HCT116 (cell line): ENCODE measurements at regions of chr4 and their contacts with region 1.

Region 1: GRCh38 chr4:83284193-83285054 is at the start of gene COQ2:
- DNase-seq: peak; percentile 79
- ATAC-seq: peak; percentile 91
- H3K4me3 ChIP-seq: peak within 1 kb of the TSS; percentile 63 to 66
- H3K27ac ChIP-seq: peak within 1 kb of the TSS; percentile 90
- H3K4me1 ChIP-seq: peaks cover 6 to 27% of the 10 kb centered on the region in 2 experiments; a peak in 3 of 4 replicates
- H3K27me3 ChIP-seq: no peaks in the 10 kb centered on the region
- CTCF ChIP-seq: peak in 1 of 3 experiments; percentile 8; a peak in 1 of 6 replicates
- POLR2A ChIP-seq: peak; percentile 72
- RAD21 ChIP-seq: no peak
- total RNA-seq, gene COQ2: 20.6 TPM

Region 2: DNA sequence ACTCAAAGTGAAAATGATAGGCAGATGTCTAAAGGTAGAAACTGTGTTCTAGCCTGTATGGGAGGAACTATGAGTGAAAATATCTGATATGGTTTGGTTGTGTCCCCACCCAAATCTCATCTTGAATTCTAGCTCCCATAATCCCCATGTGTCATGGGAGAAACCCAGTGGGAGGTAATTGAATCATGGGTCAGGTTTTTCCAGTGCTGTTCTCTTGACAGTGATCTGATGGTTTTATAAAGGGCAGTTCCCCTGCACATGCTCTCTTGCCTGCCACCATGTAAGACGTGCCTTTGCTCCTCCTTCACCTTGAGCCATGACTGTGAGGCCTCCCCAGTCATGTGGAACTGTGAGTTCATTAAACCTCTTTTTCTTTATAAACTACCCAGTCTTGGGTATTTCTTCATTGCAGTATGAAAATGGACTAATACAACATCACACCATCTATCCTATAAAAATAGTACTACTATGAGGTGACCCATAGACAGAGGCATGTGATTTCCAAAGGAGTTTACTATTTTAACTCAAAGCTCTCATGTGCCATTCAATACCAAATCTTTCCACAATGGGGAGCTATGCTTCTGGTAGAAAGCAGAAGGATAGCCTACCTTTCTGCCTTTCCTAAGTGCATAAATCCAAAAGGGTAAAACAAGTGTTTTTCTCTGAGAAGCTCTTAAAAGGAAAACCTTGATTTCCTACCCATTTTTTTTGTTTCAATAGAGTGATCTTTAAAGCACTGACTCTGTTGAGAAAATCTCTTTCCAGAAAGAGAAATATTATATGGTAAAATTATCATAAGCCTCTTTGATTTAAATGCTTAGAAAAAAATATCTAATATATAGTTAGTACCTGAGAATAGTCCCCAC is 432.3 kb before region 1 on chr4:
- CTCF ChIA-PET with region 1: interaction called, 9 read pairs
- POLR2A ChIA-PET with region 1: no interaction called
- RAD21 ChIA-PET with region 1: no interaction called
- intact Hi-C with region 1: loop called (anchors 1 kb)
- DNase-seq: peak; percentile 33
- ATAC-seq: peak; percentile 89
- H3K4me3 ChIP-seq: no peak overlapping the region
- H3K27ac ChIP-seq: no peak overlapping the region
- H3K4me1 ChIP-seq: no peaks in the 10 kb centered on the region
- H3K27me3 ChIP-seq: no peaks in the 10 kb centered on the region
- CTCF ChIP-seq: peak; percentile 39 to 67 (median 60); a peak in 5 of 6 replicates
- POLR2A ChIP-seq: no peak
- RAD21 ChIP-seq: peak; percentile 64

Region 3: DNA sequence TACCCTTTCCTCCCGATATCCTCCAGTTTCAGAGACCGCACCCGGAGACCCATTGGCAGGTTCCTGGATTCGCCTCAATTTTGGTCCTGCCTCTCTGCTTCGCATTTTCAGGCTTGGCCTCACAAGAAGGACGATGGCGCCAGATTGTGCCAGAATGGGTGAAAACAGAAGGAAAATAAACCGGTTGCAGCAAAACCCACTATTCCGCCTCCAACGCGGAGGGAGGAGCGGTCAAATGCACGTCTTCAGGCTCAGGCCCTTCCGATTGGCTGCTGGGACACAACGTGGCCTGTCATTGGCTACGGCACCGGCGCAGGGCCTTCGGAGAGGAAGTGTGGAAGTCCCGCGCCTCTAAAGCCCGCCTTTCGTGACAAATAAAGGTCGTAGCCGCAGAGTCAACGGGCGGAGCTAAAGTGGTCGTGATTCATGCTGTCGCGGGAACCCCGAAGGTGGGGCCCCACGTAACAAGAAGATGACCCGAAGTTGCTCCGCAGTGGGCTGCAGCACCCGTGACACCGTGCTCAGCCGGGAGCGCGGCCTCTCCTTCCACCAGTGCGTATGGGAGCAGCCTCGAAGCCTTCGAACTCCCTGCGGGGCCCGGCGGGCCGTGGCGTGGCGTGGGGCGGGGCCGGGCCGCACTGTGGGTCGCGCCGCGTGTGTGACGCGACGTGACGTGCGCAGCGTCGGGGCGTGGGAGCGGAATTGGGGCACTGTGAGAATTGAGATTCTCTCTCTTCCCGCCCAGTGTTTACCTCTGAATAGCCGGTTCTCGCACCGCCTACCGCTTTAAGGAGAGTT is 383.9 kb before region 1 on chr4 and contains the start of gene THAP9:
- CTCF ChIA-PET with region 1: no interaction called
- POLR2A ChIA-PET with region 1: no interaction called
- RAD21 ChIA-PET with region 1: no interaction called
- intact Hi-C with region 1: loop called (anchors 5 kb)
- DNase-seq: peak; percentile 99
- ATAC-seq: peak; percentile 95
- H3K4me3 ChIP-seq: peak within 1 kb of the TSS; percentile 93 to 95
- H3K27ac ChIP-seq: peak within 1 kb of the TSS; percentile 87
- H3K4me1 ChIP-seq: peaks cover 6 to 20% of the 10 kb centered on the region in 2 experiments; a peak in 3 of 4 replicates
- H3K27me3 ChIP-seq: no peaks in the 10 kb centered on the region
- CTCF ChIP-seq: no peak
- POLR2A ChIP-seq: peak; percentile 92
- RAD21 ChIP-seq: no peak
- total RNA-seq, gene THAP9: 6.4 TPM

Region 4: GRCh38 chr4:83054928-83055327 is 229.5 kb before region 1 on chr4:
- CTCF ChIA-PET with region 1: interaction called, 9 read pairs
- POLR2A ChIA-PET with region 1: interaction called, 4 read pairs
- RAD21 ChIA-PET with region 1: no interaction called
- intact Hi-C with region 1: loop called (anchors 1 kb)
- DNase-seq: peak; percentile 10
- ATAC-seq: peak; percentile 47
- H3K4me3 ChIP-seq: no peak overlapping the region
- H3K27ac ChIP-seq: no peak overlapping the region
- H3K4me1 ChIP-seq: no peaks in the 10 kb centered on the region
- H3K27me3 ChIP-seq: no peaks in the 10 kb centered on the region
- CTCF ChIP-seq: peak; percentile 28 to 60 (median 57); a peak in 5 of 6 replicates
- POLR2A ChIP-seq: no peak
- RAD21 ChIP-seq: peak; percentile 69

Region 5: DNA sequence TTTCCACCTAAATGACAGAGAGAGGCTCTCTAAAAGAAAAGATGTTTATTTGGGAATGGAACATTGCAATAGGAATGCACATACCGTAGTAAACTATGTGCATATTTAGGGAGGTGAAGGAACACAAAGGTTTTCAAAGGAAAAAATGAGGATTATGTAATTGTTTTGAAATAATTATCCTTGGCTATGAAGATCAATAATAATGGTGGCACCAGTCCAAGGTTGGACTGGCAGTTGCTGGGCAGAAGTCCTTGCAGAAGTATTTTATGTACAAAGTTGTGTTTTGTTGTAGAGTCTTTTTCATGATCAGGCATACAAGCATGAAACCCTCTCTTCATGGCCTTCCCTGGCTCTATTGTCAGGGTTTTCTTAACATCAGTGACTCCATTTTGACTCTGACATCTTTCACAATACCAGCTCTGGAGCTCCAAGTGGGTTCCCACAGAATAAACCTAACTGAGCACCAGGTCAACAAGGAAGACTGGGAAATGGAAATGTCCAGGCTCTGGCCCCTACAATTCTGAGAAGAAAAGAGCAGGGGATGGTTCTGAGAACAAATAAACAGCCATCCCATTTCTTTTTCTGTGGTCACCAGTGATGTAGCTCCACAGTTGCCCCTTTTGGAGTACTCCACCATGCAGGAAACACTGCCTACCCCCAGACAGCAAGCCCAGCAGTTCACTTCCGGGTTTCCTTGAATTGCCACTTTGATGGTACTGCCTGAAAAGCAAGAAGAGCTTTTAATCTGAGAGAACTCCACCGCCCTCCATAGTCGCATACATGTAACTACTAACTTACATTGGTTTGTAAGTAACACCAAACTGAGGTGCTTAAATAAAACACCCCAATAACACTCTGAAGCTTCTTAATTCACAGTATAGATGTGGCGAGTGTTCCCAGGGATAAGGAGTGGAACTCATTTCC is 103.6 kb after region 1 on chr4:
- CTCF ChIA-PET with region 1: no interaction called
- POLR2A ChIA-PET with region 1: no interaction called
- RAD21 ChIA-PET with region 1: no interaction called
- intact Hi-C with region 1: no loop called
- DNase-seq: no peak
- ATAC-seq: no peak
- H3K4me3 ChIP-seq: no peak overlapping the region
- H3K27ac ChIP-seq: no peak overlapping the region
- H3K4me1 ChIP-seq: no peaks in the 10 kb centered on the region
- H3K27me3 ChIP-seq: no peaks in the 10 kb centered on the region
- CTCF ChIP-seq: no peak
- POLR2A ChIP-seq: no peak
- RAD21 ChIP-seq: 0 out of 2 replicates have a peak, but pooled peaks have one; percentile 10